Brain microvascular endothelial cell (primary cell): ENCODE measurements at regions of chr1 and their contacts with region 1.

Region 1: DNA sequence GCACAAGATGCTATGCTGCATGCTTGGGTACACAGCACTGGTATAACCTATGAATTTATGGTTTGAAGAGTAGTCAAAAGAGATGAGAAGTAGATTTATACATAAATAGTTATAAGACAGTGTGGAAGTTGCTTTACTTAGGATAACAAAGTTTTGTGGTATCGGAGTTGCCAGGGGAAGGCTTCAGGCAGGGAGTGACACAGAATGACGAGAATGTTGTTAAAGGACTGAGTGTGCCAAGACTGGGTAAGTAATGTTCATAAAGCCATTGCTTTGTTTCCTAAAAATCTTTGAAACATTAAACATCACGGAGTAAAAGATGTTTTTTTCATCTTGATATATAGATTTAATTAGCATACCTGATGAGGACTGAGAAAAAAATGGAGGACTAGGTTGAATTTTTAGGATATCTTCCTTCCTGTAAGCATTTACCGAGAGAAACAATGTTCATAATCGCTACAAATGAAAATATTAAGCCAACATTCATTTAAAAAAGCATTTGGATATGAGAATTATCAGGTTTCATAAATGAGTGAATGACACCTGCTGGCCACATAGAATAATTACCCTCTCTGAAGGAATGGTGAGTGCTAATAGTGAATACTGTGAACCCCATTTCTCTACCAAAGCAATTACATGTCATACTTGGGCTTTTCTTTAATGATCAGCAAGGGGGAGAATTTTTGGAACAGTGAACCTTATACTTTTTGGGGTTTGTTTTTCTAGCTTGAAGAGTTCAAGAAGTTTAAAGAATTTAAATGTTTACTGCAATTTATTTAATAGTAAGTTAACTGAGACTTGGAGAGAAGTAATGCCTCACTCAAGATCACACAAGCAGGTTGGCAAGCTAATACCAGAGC is 28.4 kb downstream of the EXTL2 start:
- DNase-seq: peak; percentile 37
- H3K4me3 ChIP-seq: no peak overlapping the region
- H3K27ac ChIP-seq: peak overlapping the region; percentile 25
- H3K27me3 ChIP-seq: no peaks in the 10 kb centered on the region
- CTCF ChIP-seq: peak; percentile 43

Region 2: DNA sequence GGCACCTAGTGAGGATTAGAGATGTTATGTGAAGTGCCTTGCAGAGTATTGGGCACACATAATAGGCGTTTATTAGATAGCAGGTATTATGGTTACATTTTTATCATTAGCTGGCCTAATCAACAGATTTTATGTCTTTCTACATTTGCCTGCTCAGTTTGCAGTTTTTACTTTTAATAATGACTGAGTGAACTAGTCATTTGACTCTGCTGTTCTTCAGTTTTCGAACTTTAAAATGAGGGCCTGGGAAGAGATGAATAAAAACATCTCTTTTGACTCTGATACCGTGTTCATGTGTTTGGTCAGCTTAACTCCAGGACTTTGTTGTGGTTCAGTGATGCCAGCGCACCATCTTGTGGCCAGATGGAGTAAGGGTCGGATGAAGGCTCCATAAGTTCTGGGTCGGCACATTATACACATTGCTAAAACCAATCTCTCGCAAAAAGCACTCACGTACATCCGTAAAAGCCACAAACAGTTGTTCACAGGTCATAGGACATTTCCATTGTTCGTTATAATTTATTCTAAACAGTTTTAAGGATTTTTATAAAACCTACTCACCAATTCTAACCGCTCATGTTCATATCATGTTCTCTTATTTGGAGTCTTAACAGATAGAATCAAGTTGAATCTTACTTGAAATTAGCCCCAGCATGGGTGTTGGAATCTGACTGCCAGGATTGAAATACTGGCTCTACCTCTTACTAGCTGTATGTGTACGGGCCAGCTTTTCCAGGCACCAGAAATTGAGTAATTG is 406.7 kb before region 1 on chr1:
- in situ Hi-C with region 1: loop called (anchors 25 kb)
- DNase-seq: peak; percentile 80
- H3K4me3 ChIP-seq: no peak overlapping the region
- H3K27ac ChIP-seq: no peak overlapping the region
- H3K27me3 ChIP-seq: no peaks in the 10 kb centered on the region
- CTCF ChIP-seq: peak; percentile 92

Region 3: GRCh38 chr1:100502052-100502783 is 364.1 kb before region 1 on chr1:
- in situ Hi-C with region 1: no loop called
- DNase-seq: no peak
- H3K4me3 ChIP-seq: no peak overlapping the region
- H3K27ac ChIP-seq: no peak overlapping the region
- H3K27me3 ChIP-seq: no peaks in the 10 kb centered on the region
- CTCF ChIP-seq: no peak

Region 4: DNA sequence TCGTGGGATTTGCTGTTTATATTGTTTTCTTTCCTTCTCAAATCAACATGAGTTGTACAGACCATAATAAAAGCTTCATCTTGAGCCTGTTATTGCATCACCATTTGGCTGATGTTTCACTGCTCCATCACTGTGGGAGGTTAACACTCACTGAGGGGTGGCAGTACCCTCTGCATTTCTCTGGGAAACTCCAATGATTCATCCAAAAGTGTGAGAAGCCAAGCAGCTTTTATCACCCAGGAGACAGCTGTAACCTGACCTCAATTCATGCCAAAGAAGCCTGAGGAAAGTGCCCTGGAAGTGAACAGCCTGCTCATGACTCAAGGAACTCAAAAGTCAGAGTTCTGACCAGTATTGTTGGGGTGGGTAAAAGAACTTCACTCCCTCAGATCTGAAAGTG is 244.2 kb before region 1 on chr1:
- in situ Hi-C with region 1: loop called (anchors 10 kb)
- DNase-seq: peak; percentile 99
- H3K4me3 ChIP-seq: no peak overlapping the region
- H3K27ac ChIP-seq: peak overlapping the region; percentile 96
- H3K27me3 ChIP-seq: no peaks in the 10 kb centered on the region
- CTCF ChIP-seq: no peak

Region 5: GRCh38 chr1:101148980-101149379 is 282.7 kb after region 1 on chr1:
- in situ Hi-C with region 1: no loop called
- DNase-seq: no peak
- H3K4me3 ChIP-seq: no peak overlapping the region
- H3K27ac ChIP-seq: no peak overlapping the region
- H3K27me3 ChIP-seq: no peaks in the 10 kb centered on the region
- CTCF ChIP-seq: no peak

Region 6: GRCh38 chr1:101198842-101199636 is 332.8 kb after region 1 on chr1:
- in situ Hi-C with region 1: no loop called
- DNase-seq: no peak
- H3K4me3 ChIP-seq: no peak overlapping the region
- H3K27ac ChIP-seq: no peak overlapping the region
- H3K27me3 ChIP-seq: no peaks in the 10 kb centered on the region
- CTCF ChIP-seq: no peak